Psoas muscle (tissue), 8 donors: ENCODE measurements at regions of chr6 and their contacts with region 1.

Region 1: GRCh38 chr6:17167327-17167979 is 65.6 kb downstream of the STMND1 start:
- DNase-seq: peak; percentile 28 to 63
- ATAC-seq: peak; percentile 64 to 72 (median 68)
- H3K4me3 ChIP-seq: peak overlapping the region; percentile 24
- H3K27ac ChIP-seq: peak overlapping the region; percentile 96
- H3K4me1 ChIP-seq: peaks cover 19% of the 10 kb centered on the region
- H3K27me3 ChIP-seq: no peaks in the 10 kb centered on the region
- CTCF ChIP-seq: peak; percentile 61

Region 2: GRCh38 chr6:16849280-16849987 is 318.0 kb before region 1 on chr6:
- intact Hi-C with region 1: no loop called
- DNase-seq: no peak
- ATAC-seq: peak; percentile 80 to 98 (median 92)
- H3K4me3 ChIP-seq: peak overlapping the region; percentile 31
- H3K27ac ChIP-seq: peak overlapping the region; percentile 74
- H3K4me1 ChIP-seq: peaks cover 12% of the 10 kb centered on the region
- H3K27me3 ChIP-seq: no peaks in the 10 kb centered on the region
- CTCF ChIP-seq: no peak

Region 3: GRCh38 chr6:17178754-17179529 is 11.5 kb after region 1 on chr6:
- intact Hi-C with region 1: no loop called
- DNase-seq: no peak
- ATAC-seq: peak; percentile 67 to 92 (median 88)
- H3K4me3 ChIP-seq: no peak overlapping the region
- H3K27ac ChIP-seq: peak overlapping the region; percentile 51
- H3K4me1 ChIP-seq: peaks cover 8% of the 10 kb centered on the region
- H3K27me3 ChIP-seq: no peaks in the 10 kb centered on the region
- CTCF ChIP-seq: no peak

Region 4: GRCh38 chr6:17200395-17200794 is 32.9 kb after region 1 on chr6:
- intact Hi-C with region 1: loop called in 1 of 2 experiments (anchors 2 kb)
- DNase-seq: no peak
- ATAC-seq: no peak
- H3K4me3 ChIP-seq: no peak overlapping the region
- H3K27ac ChIP-seq: peak overlapping the region; percentile 99
- H3K4me1 ChIP-seq: peaks cover 34% of the 10 kb centered on the region
- H3K27me3 ChIP-seq: no peaks in the 10 kb centered on the region
- CTCF ChIP-seq: no peak

Region 5: DNA sequence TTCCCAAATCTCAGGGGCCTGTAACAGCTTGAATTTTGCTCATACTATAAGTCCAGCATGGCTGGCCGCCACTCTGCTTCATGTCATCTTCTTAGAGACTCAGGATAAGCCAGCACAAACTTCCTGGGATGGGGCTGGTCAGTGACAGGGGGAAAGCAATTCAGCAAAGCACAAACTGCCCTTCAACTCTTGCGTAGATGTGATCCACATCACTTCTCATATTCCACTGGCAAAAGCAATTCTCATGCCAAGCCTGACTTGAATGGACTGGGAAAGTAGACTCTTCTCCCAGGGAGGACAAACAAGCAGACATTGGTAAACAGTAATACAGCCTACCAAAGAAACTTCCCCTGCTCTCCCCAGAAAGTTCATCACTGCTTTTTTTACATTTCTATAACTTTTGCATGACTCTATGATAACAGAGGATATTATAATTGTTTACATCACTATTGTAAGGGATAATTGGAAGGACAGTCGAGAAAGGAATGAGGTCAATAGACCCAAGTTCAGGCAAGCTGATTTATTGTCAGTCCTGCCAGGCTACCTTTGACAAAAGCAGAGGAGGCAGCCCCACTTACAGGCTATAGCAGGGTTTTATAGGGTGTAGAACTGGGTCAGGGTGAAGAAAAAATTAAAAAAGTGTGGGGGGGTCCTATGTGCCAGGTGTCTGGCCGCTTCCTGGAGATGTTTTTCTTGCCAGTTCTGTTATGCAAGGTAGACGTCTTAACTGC is 151.1 kb after region 1 on chr6:
- intact Hi-C with region 1: no loop called
- DNase-seq: peak; percentile 57 to 72
- ATAC-seq: peak; percentile 94 to 96 (median 96)
- H3K4me3 ChIP-seq: peak overlapping the region; percentile 11
- H3K27ac ChIP-seq: peak overlapping the region; percentile 95
- H3K4me1 ChIP-seq: peaks cover 18% of the 10 kb centered on the region
- H3K27me3 ChIP-seq: no peaks in the 10 kb centered on the region
- CTCF ChIP-seq: no peak

Region 6: GRCh38 chr6:17361013-17361412 is 193.6 kb after region 1 on chr6:
- intact Hi-C with region 1: no loop called
- DNase-seq: no peak
- ATAC-seq: no peak
- H3K4me3 ChIP-seq: no peak overlapping the region
- H3K27ac ChIP-seq: no peak overlapping the region
- H3K4me1 ChIP-seq: no peaks in the 10 kb centered on the region
- H3K27me3 ChIP-seq: no peaks in the 10 kb centered on the region
- CTCF ChIP-seq: no peak